Endothelial cell of umbilical vein (primary cell): ENCODE measurements at regions of chr14 and their contacts with region 1.

Region 1: DNA sequence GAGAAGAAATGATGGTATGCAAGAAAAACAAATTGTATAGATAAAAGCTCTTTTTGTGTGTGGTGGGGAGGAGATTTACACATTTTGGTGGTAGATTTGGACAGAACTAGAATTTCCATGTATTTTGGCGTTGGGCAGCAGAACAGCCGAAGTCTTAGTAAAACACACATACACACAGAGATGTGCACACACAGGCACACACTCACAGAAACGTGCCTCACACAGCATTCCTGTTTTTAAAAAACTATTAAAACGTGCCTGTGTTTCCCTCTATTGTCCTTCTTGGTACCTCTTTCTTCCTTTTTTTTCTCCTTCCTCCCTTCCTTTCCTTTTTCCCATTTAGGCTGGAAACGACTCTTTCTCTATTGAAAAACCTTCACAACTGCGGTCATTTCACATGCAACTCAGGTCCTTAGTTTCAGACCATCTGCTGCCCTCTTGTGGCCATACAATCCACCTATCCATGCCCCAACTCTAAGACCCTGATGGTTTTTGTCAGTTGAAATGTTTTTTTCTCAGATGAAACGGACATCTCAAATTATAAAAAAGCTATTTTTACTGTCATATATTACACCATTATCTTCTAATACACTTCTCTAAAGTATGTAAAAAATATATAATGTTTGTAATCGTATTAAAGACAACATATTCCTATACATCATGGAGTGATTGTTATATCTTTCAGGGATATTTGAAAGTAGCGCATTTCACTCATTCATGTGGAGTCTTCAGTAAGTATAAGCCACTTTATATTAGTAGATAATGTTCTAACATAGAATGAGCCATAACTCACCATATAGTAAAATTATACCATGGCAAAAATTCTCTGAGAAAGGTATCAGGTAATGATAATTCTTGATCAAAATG is 386.7 kb upstream of the NOVA1 start:
- DNase-seq: peak; percentile 57
- H3K4me3 ChIP-seq: no peak overlapping the region
- H3K27ac ChIP-seq: no peak overlapping the region
- H3K4me1 ChIP-seq: no peaks in the 10 kb centered on the region
- H3K27me3 ChIP-seq: no peaks in the 10 kb centered on the region
- CTCF ChIP-seq: peak; percentile 67
- POLR2A ChIP-seq: no peak

Region 2: GRCh38 chr14:26163791-26164190 is 820.8 kb before region 1 on chr14:
- CTCF ChIA-PET with region 1: interaction called, 10 read pairs
- POLR2A ChIA-PET with region 1: no interaction called
- dilution Hi-C with region 1: no loop called
- intact Hi-C with region 1: loop called (anchors 10 kb)
- DNase-seq: peak; percentile 33
- H3K4me3 ChIP-seq: no peak overlapping the region
- H3K27ac ChIP-seq: no peak overlapping the region
- H3K4me1 ChIP-seq: no peaks in the 10 kb centered on the region
- H3K27me3 ChIP-seq: no peaks in the 10 kb centered on the region
- CTCF ChIP-seq: peak; percentile 9 to 49
- POLR2A ChIP-seq: no peak

Region 3: GRCh38 chr14:26394150-26394810 is 590.3 kb before region 1 on chr14:
- CTCF ChIA-PET with region 1: interaction called, 44 read pairs
- POLR2A ChIA-PET with region 1: no interaction called
- dilution Hi-C with region 1: no loop called
- intact Hi-C with region 1: loop called (anchors 1 kb)
- DNase-seq: peak; percentile 19
- H3K4me3 ChIP-seq: no peak overlapping the region
- H3K27ac ChIP-seq: no peak overlapping the region
- H3K4me1 ChIP-seq: no peaks in the 10 kb centered on the region
- H3K27me3 ChIP-seq: peaks cover 0 to 2% of the 10 kb centered on the region in 2 experiments
- CTCF ChIP-seq: peak in 1 of 2 donors; percentile 23
- POLR2A ChIP-seq: no peak

Region 4: GRCh38 chr14:27015065-27015464 is 30.5 kb after region 1 on chr14:
- CTCF ChIA-PET with region 1: no interaction called
- POLR2A ChIA-PET with region 1: no interaction called
- dilution Hi-C with region 1: no loop called
- intact Hi-C with region 1: no loop called
- DNase-seq: no peak
- H3K4me3 ChIP-seq: no peak overlapping the region
- H3K27ac ChIP-seq: no peak overlapping the region
- H3K4me1 ChIP-seq: no peaks in the 10 kb centered on the region
- H3K27me3 ChIP-seq: no peaks in the 10 kb centered on the region
- CTCF ChIP-seq: no peak
- POLR2A ChIP-seq: no peak

Region 5: GRCh38 chr14:27528328-27528727 is 543.8 kb after region 1 on chr14:
- CTCF ChIA-PET with region 1: interaction called, 4 read pairs
- POLR2A ChIA-PET with region 1: no interaction called
- dilution Hi-C with region 1: no loop called
- intact Hi-C with region 1: loop called (anchors 1 kb)
- DNase-seq: peak; percentile 50
- H3K4me3 ChIP-seq: no peak overlapping the region
- H3K27ac ChIP-seq: no peak overlapping the region
- H3K4me1 ChIP-seq: no peaks in the 10 kb centered on the region
- H3K27me3 ChIP-seq: no peaks in the 10 kb centered on the region
- CTCF ChIP-seq: peak; percentile 32 to 51
- POLR2A ChIP-seq: no peak

Region 6: GRCh38 chr14:28635387-28635786 is 1650.8 kb after region 1 on chr14:
- CTCF ChIA-PET with region 1: no interaction called
- POLR2A ChIA-PET with region 1: no interaction called
- dilution Hi-C with region 1: no loop called
- intact Hi-C with region 1: loop called (anchors 10 kb)
- DNase-seq: peak; percentile 34
- H3K4me3 ChIP-seq: no peak overlapping the region
- H3K27ac ChIP-seq: no peak overlapping the region
- H3K4me1 ChIP-seq: no peaks in the 10 kb centered on the region
- H3K27me3 ChIP-seq: no peaks in the 10 kb centered on the region
- CTCF ChIP-seq: peak; percentile 18 to 23
- POLR2A ChIP-seq: no peak